Activated CD4-positive, alpha-beta memory T cell treated with anti-CD3 and anti-CD28 coated beads for 36 hours (primary cell): ENCODE measurements at regions of chr3 and their contacts with region 1.

Region 1: GRCh38 chr3:44198284-44199269 is 43.1 kb upstream of the TOPAZ1 start:
- DNase-seq: peak; percentile 78
- H3K4me3 Mint-ChIP-seq: no peak overlapping the region
- H3K27ac Mint-ChIP-seq: no peak overlapping the region
- H3K4me1 Mint-ChIP-seq: peaks cover 2% of the 10 kb centered on the region
- H3K27me3 Mint-ChIP-seq: peaks cover 3% of the 10 kb centered on the region

Region 2: DNA sequence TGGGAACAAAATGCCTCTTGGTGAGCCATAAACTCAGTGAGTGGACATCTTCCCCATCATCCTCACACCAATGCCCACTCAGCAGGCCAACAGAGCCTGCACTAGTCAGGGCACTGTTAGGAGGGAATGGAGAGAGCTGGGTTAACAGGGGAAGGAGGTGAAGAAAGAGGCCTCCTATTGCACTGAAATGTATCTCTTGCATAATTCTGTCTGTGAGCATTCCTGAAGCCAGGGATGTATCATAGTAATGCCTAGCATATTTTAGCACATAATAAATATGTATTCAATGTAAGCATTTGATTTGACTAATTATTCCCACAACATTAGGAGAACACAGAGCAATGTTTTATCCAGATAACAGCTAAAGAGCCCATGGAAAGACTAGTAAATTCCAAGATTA is 658.0 kb before region 1 on chr3:
- CTCF ChIA-PET with region 1: interaction called, 6 read pairs
- POLR2A ChIA-PET with region 1: no interaction called
- intact Hi-C with region 1: loop called (anchors 1 kb)
- DNase-seq: no peak
- H3K4me3 Mint-ChIP-seq: no peak overlapping the region
- H3K27ac Mint-ChIP-seq: no peak overlapping the region
- H3K4me1 Mint-ChIP-seq: no peaks in the 10 kb centered on the region
- H3K27me3 Mint-ChIP-seq: no peaks in the 10 kb centered on the region

Region 3: DNA sequence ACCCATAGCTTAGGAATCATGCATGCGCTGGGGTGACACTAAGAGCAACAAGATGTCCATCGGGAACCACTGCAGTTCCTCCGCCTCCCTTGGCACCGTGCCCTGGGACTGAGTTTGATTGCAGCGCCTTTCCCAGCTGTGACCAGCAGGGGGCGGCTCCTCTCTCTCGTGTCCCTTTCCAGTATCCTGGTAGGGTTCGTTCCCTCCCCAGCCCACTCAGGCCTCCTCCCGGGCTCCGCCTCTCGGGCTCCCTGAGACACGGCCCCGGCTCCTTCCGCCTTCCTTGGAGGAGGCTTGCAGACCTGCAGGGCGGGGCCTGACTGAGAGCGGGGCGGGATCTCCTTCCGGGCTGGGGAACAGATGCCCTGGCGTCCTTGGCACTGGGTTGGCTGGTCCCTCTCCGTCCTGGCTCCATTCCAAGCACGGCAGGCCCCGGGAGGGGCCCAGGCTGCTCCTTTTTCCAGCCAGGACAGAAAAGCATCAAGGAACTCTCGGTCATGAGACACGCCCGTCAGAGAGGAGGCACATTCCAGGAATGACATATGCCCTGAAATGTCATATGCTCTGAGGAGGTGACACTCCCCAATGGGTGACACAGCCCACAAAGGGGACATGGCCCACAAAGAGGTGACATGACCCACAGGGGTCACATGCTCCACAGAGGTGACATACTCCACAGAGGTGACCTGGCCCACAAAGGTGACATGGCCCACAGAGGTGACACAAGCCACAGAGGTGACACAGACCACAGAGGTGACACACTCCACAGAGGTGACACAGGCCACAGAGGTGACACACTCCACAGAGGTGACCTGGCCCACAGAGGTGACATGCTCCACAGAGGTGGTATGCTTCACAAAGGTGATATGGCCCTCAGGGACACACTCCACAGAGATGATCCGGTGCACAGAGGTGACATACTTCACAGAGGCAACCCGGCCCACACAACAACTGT is 428.8 kb before region 1 on chr3:
- CTCF ChIA-PET with region 1: interaction called, 19 read pairs
- POLR2A ChIA-PET with region 1: no interaction called
- intact Hi-C with region 1: loop called (anchors 1 kb)
- DNase-seq: peak; percentile 86
- H3K4me3 Mint-ChIP-seq: no peak overlapping the region
- H3K27ac Mint-ChIP-seq: no peak overlapping the region
- H3K4me1 Mint-ChIP-seq: peaks cover 28% of the 10 kb centered on the region
- H3K27me3 Mint-ChIP-seq: no peaks in the 10 kb centered on the region

Region 4: DNA sequence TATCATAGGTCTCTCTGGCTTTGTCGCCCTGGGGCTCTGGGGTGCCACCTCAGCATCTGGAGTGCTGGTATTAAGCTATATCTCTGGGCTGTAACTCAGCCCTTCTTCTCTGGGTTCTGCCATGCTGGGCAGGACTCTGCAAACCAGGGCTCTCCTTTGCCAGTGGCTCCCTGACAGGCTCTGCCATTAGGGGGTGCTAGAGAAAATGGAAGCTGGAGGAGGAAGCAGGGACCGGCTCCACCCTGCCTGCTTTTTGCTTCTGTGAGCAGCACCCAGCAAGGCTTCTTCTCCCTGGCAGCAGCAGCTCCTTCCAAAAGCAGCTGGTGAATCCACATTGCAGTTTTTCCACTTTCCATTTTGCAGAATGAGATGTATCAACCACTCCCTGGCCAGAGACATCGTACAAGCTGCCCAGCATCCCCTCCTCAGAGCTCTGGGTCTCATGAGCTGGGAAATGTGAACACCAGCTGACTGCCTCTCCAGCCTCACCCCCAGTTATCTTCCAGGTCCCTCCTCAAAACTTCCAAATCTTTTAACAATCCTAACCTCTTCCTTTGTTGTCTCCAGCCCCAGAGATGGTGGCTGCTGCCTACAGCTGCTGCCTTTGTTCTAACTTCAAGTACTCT is 342.8 kb before region 1 on chr3:
- CTCF ChIA-PET with region 1: interaction called, 15 read pairs
- POLR2A ChIA-PET with region 1: no interaction called
- intact Hi-C with region 1: no loop called
- DNase-seq: peak; percentile 59
- H3K4me3 Mint-ChIP-seq: no peak overlapping the region
- H3K27ac Mint-ChIP-seq: no peak overlapping the region
- H3K4me1 Mint-ChIP-seq: no peaks in the 10 kb centered on the region
- H3K27me3 Mint-ChIP-seq: peaks cover 47% of the 10 kb centered on the region

Region 5: GRCh38 chr3:43879166-43879565 is 319.4 kb before region 1 on chr3:
- CTCF ChIA-PET with region 1: no interaction called
- POLR2A ChIA-PET with region 1: no interaction called
- intact Hi-C with region 1: loop called (anchors 5 kb)
- DNase-seq: peak; percentile 18
- H3K4me3 Mint-ChIP-seq: no peak overlapping the region
- H3K27ac Mint-ChIP-seq: no peak overlapping the region
- H3K4me1 Mint-ChIP-seq: no peaks in the 10 kb centered on the region
- H3K27me3 Mint-ChIP-seq: no peaks in the 10 kb centered on the region

Region 6: DNA sequence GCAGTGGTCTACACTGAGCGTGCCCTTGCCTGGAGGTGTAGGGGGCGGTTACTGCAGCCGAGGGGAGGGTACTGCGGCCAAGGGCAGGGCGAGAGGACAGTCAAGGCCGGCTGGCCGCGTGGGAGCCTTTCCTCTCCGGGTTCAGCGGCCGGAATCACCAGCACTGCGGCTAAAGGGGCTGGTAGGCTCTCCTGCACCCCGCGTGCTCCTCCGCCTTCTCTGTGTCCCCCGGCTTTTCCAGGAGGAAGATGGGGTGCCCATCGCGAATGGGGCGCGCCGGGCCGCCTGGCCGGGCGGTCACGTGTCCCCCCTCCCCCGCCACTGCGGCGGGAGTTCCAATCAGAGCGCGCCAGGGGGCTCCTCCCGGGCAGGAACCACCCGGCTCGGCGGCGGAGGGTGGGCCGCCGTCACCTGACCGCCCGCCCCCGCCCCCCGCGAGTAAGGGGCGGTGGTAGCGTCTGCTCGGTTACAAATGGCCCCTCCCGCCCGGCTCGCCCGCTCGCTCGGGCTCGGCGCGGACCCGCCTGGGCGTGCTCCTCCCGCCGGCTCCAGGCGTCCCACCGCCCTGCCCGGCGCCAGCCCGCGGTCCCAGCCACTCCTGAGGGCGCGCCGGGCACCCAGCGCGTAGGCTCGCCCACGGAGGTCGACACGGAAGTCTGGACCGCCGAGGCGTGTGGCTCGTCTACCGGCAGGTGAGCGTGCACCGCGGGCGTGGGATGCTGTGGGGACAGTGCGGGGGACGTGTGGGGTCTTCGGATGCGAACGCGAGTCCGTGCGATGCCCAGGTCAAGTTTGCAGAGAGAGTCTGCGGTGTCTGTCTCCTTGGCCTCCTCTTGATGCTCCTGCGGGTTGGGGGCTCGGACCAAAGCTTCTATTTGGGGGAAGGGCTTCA is 199.5 kb before region 1 on chr3:
- CTCF ChIA-PET with region 1: no interaction called
- POLR2A ChIA-PET with region 1: no interaction called
- intact Hi-C with region 1: loop called (anchors 2 kb)
- DNase-seq: no peak
- H3K4me3 Mint-ChIP-seq: peak overlapping the region; percentile 21
- H3K27ac Mint-ChIP-seq: no peak overlapping the region
- H3K4me1 Mint-ChIP-seq: peaks cover 39% of the 10 kb centered on the region
- H3K27me3 Mint-ChIP-seq: peaks cover 64% of the 10 kb centered on the region

Region 7: DNA sequence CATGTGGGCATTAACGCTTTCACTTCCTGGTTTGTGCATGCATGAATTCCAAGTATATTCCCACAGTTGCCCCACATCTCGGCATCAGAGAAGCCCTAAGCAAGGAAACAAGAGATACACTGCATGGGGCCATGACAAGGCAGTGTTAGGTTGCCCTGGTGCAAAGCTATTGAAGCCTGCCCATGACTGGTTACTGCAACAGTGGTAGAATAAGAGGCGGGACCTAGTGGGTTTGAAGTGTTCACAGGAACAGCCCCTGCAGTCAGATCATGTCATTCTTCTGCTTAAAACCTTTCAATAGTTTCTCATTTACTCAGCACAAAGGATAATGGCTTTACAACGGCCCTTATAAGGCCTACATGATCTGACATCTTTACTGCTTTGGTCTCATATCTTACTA is 37.8 kb before region 1 on chr3:
- CTCF ChIA-PET with region 1: no interaction called
- POLR2A ChIA-PET with region 1: no interaction called
- intact Hi-C with region 1: no loop called
- DNase-seq: no peak
- H3K4me3 Mint-ChIP-seq: no peak overlapping the region
- H3K27ac Mint-ChIP-seq: no peak overlapping the region
- H3K4me1 Mint-ChIP-seq: no peaks in the 10 kb centered on the region
- H3K27me3 Mint-ChIP-seq: peaks cover 19% of the 10 kb centered on the region